WTC11 (cell line): ENCODE measurements at regions of chr14 and their contacts with region 1.

Region 1: DNA sequence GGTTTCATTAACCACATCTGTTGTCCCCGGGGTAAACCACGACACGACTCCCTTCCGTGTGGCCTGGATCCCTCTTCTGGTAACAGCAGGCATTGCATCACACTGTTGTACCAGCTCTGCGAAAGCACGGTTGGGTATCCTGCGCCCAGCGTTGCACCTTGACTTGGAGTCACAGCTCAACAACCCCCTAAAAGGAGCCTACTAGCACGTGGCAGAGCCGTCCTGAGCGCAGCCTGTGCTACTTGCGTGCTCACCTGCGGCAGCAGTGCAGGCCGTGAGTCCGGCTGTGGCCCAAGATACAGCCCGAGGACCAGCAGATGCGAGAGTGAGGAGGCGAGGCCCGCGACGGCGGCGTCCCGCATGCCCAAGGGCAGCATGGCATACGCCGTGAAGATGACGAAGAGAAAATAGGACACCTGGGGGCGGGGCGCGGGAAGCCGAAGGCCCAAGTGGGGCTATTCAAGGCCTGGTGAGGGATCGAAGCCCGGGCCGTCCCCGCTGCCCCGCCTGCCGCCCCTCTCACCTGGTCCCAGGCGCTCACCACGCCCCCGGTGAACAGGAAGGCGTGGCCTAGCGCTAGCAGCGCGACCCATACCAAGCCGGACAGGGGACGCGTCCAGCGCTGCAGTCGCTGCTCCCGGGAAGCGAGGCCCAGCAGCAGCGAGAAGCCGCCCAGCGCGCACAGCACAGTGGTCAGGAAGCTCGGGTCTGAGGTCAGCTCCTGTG is 2.4 kb downstream of the ADCY4 start:
- DNase-seq: peak; percentile 82
- ATAC-seq: peak; percentile 72
- H3K4me3 Mint-ChIP-seq: peak overlapping the region; percentile 78
- H3K27ac Mint-ChIP-seq: no peak overlapping the region
- H3K4me1 Mint-ChIP-seq: peaks cover 24% of the 10 kb centered on the region
- H3K27me3 Mint-ChIP-seq: peaks cover 92% of the 10 kb centered on the region
- CTCF ChIP-seq: peak; percentile 68

Region 2: GRCh38 chr14:24195191-24196070 is 137.0 kb before region 1 on chr14 and contains the start of gene TM9SF1:
- CTCF ChIA-PET with region 1: no interaction called
- POLR2A ChIA-PET with region 1: no interaction called
- DNase-seq: peak; percentile 84
- ATAC-seq: peak; percentile 86
- H3K4me3 Mint-ChIP-seq: peak within 1 kb of the TSS; percentile 94
- H3K27ac Mint-ChIP-seq: peak within 1 kb of the TSS; percentile 97
- H3K4me1 Mint-ChIP-seq: peaks cover 23% of the 10 kb centered on the region
- H3K27me3 Mint-ChIP-seq: no peaks in the 10 kb centered on the region
- CTCF ChIP-seq: no peak
- total RNA-seq, gene TM9SF1: 27.9 to 29.2 TPM (median 28.4 TPM) in 3 replicates

Region 3: GRCh38 chr14:24258548-24259251 is 73.7 kb before region 1 on chr14:
- CTCF ChIA-PET with region 1: no interaction called
- POLR2A ChIA-PET with region 1: no interaction called
- DNase-seq: no peak
- ATAC-seq: no peak
- H3K4me3 Mint-ChIP-seq: no peak overlapping the region
- H3K27ac Mint-ChIP-seq: no peak overlapping the region
- H3K4me1 Mint-ChIP-seq: no peaks in the 10 kb centered on the region
- H3K27me3 Mint-ChIP-seq: no peaks in the 10 kb centered on the region; the same call in 1 of the 2 replicates
- CTCF ChIP-seq: no peak

Region 4: GRCh38 chr14:24271134-24271833 is 61.1 kb before region 1 on chr14 and contains the start of gene RABGGTA:
- CTCF ChIA-PET with region 1: interaction called, 18 read pairs
- POLR2A ChIA-PET with region 1: no interaction called
- DNase-seq: peak; percentile 95
- ATAC-seq: peak; percentile 94
- H3K4me3 Mint-ChIP-seq: peak within 1 kb of the TSS; percentile 72
- H3K27ac Mint-ChIP-seq: peak within 1 kb of the TSS; percentile 87
- H3K4me1 Mint-ChIP-seq: peaks cover 16% of the 10 kb centered on the region
- H3K27me3 Mint-ChIP-seq: no peaks in the 10 kb centered on the region
- CTCF ChIP-seq: 0 out of 2 replicates have a peak, but pooled peaks have one; percentile 15
- total RNA-seq, gene RABGGTA: 22.3 to 28.1 TPM (median 27.1 TPM) in 3 replicates

Region 5: DNA sequence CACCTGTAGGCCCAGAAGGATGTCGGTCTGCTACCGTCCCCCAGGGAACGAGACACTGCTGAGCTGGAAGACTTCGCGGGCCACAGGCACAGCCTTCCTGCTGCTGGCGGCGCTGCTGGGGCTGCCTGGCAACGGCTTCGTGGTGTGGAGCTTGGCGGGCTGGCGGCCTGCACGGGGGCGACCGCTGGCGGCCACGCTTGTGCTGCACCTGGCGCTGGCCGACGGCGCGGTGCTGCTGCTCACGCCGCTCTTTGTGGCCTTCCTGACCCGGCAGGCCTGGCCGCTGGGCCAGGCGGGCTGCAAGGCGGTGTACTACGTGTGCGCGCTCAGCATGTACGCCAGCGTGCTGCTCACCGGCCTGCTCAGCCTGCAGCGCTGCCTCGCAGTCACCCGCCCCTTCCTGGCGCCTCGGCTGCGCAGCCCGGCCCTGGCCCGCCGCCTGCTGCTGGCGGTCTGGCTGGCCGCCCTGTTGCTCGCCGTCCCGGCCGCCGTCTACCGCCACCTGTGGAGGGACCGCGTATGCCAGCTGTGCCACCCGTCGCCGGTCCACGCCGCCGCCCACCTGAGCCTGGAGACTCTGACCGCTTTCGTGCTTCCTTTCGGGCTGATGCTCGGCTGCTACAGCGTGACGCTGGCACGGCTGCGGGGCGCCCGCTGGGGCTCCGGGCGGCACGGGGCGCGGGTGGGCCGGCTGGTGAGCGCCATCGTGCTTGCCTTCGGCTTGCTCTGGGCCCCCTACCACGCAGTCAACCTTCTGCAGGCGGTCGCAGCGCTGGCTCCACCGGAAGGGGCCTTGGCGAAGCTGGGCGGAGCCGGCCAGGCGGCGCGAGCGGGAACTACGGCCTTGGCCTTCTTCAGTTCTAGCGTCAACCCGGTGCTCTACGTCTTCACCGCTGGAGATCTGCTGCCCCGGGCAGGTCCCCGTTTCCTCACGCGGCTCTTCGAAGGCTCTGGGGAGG is 21.5 kb before region 1 on chr14 and contains the start of gene LTB4R:
- CTCF ChIA-PET with region 1: interaction called, 66 read pairs
- POLR2A ChIA-PET with region 1: no interaction called
- DNase-seq: peak; percentile 78
- ATAC-seq: peak; percentile 68
- H3K4me3 Mint-ChIP-seq: peak within 1 kb of the TSS; percentile 47
- H3K27ac Mint-ChIP-seq: no peak within 1 kb of the TSS
- H3K4me1 Mint-ChIP-seq: peaks cover 15% of the 10 kb centered on the region
- H3K27me3 Mint-ChIP-seq: peaks cover 44% of the 10 kb centered on the region
- CTCF ChIP-seq: no peak; the same call in 1 of the 2 replicates
- total RNA-seq, gene LTB4R: 6.9 to 9.4 TPM (median 7.6 TPM) in 3 replicates

Region 6: DNA sequence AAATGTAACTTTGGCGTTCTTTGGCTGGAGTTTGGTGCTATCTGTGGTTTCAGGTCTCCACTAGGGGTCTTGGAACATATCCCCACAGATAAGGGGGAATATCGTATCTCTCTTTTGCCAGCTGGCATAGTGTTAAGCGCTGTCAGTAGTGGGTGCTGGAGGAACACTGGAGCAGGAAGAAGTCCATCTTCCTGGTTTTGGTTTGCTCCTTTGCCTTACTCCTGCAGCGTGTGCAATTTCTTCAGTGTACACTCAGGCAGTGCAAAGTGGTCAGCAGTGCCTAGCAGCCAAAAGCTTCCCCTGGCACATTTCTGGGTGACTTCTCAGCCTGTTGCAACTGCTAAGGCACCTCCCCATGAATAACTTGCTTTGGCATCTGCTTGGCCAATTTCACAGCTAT is 19.1 kb after region 1 on chr14:
- CTCF ChIA-PET with region 1: interaction called, 43 read pairs
- POLR2A ChIA-PET with region 1: no interaction called
- DNase-seq: no peak
- ATAC-seq: peak; percentile 50
- H3K4me3 Mint-ChIP-seq: no peak overlapping the region
- H3K27ac Mint-ChIP-seq: no peak overlapping the region
- H3K4me1 Mint-ChIP-seq: no peaks in the 10 kb centered on the region
- H3K27me3 Mint-ChIP-seq: peaks cover 84% of the 10 kb centered on the region
- CTCF ChIP-seq: no peak

Region 7: GRCh38 chr14:24372701-24373416 is 40.4 kb after region 1 on chr14:
- CTCF ChIA-PET with region 1: interaction called, 16 read pairs
- POLR2A ChIA-PET with region 1: interaction called, 7 read pairs
- DNase-seq: no peak
- ATAC-seq: no peak
- H3K4me3 Mint-ChIP-seq: no peak overlapping the region
- H3K27ac Mint-ChIP-seq: no peak overlapping the region
- H3K4me1 Mint-ChIP-seq: peaks cover 32% of the 10 kb centered on the region
- H3K27me3 Mint-ChIP-seq: no peaks in the 10 kb centered on the region
- CTCF ChIP-seq: no peak

Region 8: GRCh38 chr14:24418492-24418873 is 86.1 kb after region 1 on chr14:
- CTCF ChIA-PET with region 1: interaction called, 518 read pairs
- POLR2A ChIA-PET with region 1: no interaction called
- DNase-seq: no peak
- ATAC-seq: no peak
- H3K4me3 Mint-ChIP-seq: no peak overlapping the region
- H3K27ac Mint-ChIP-seq: no peak overlapping the region
- H3K4me1 Mint-ChIP-seq: no peaks in the 10 kb centered on the region
- H3K27me3 Mint-ChIP-seq: peaks cover 30% of the 10 kb centered on the region
- CTCF ChIP-seq: no peak